Panc1 (cell line): ENCODE measurements at regions of chr2 and their contacts with region 1.

Region 1: GRCh38 chr2:202290970-202291369 is 25.4 kb downstream of the NOP58 start:
- DNase-seq: no peak
- ATAC-seq: no peak
- H3K4me3 ChIP-seq: no peak overlapping the region
- H3K27ac ChIP-seq: no peak overlapping the region
- H3K4me1 ChIP-seq: no peaks in the 10 kb centered on the region
- H3K27me3 ChIP-seq: no peaks in the 10 kb centered on the region
- CTCF ChIP-seq: no peak

Region 2: GRCh38 chr2:201733544-201733943 is 557.4 kb before region 1 on chr2:
- CTCF ChIA-PET with region 1: interaction called, 17 read pairs
- POLR2A ChIA-PET with region 1: no interaction called
- in situ Hi-C with region 1: no loop called
- intact Hi-C with region 1: no loop called
- DNase-seq: peak; percentile 36
- ATAC-seq: no peak
- H3K4me3 ChIP-seq: no peak overlapping the region
- H3K27ac ChIP-seq: no peak overlapping the region
- H3K4me1 ChIP-seq: no peaks in the 10 kb centered on the region; the same call in 1 of the 2 replicates
- H3K27me3 ChIP-seq: no peaks in the 10 kb centered on the region
- CTCF ChIP-seq: no peak

Region 3: DNA sequence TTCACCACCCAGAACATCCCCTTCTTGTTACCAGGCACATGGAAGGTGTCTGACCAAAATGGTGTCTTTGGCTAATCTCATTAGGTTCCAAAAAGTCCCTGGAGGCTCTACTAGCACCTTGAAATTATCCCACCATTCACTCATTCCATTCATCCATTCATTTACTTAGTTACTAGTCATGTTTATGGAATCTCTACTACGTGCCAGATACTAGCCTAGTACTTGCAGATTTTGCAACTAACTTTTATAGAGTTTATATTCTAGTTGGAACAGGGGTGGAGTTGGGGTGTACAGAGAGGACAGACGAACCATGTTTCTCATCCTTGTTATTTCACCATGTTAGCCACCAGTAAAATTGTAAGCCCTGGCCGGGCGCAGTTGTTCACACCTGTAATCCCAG is 29.4 kb before region 1 on chr2:
- CTCF ChIA-PET with region 1: interaction called, 11 read pairs
- POLR2A ChIA-PET with region 1: no interaction called
- in situ Hi-C with region 1: no loop called
- intact Hi-C with region 1: no loop called
- DNase-seq: no peak
- ATAC-seq: no peak
- H3K4me3 ChIP-seq: no peak overlapping the region
- H3K27ac ChIP-seq: no peak overlapping the region
- H3K4me1 ChIP-seq: 0 out of 2 replicates have a peak, but pooled peaks cover 4% of the 10 kb centered on the region
- H3K27me3 ChIP-seq: no peaks in the 10 kb centered on the region
- CTCF ChIP-seq: no peak

Region 4: DNA sequence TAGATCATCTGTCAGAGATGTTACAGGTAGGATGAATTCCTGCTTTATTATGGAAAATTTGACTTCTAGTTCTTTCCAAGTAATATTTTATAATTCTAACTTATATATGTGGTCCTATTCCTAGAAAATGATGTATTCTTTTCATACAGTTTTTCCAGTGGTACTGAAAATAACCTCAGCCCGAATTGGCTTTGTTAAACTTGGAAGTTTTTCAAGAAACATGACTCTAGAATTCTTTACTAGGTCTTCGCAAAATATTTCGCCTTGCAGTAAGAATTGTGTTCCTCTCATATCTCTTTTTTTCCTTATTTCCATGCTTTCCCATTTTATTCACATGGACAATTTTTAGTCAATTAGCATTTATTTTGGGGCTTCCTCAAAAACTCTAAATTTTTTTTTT is 145.7 kb after region 1 on chr2:
- CTCF ChIA-PET with region 1: no interaction called
- POLR2A ChIA-PET with region 1: interaction called, 10 read pairs
- in situ Hi-C with region 1: no loop called
- intact Hi-C with region 1: no loop called
- DNase-seq: no peak
- ATAC-seq: no peak
- H3K4me3 ChIP-seq: no peak overlapping the region
- H3K27ac ChIP-seq: no peak overlapping the region
- H3K4me1 ChIP-seq: no peaks in the 10 kb centered on the region; the same call in none of the 2 replicates
- H3K27me3 ChIP-seq: no peaks in the 10 kb centered on the region
- CTCF ChIP-seq: no peak

Region 5: GRCh38 chr2:202941771-202942170 is 650.8 kb after region 1 on chr2:
- CTCF ChIA-PET with region 1: no interaction called
- POLR2A ChIA-PET with region 1: no interaction called
- in situ Hi-C with region 1: no loop called
- intact Hi-C with region 1: no loop called
- DNase-seq: no peak
- ATAC-seq: no peak
- H3K4me3 ChIP-seq: no peak overlapping the region
- H3K27ac ChIP-seq: no peak overlapping the region
- H3K4me1 ChIP-seq: no peaks in the 10 kb centered on the region
- H3K27me3 ChIP-seq: no peaks in the 10 kb centered on the region
- CTCF ChIP-seq: no peak